PC-3 (cell line): ENCODE measurements at regions of chr2 and their contacts with region 1.

Region 1: GRCh38 chr2:121670181-121670580 is 20.9 kb upstream of the CLASP1 start:
- DNase-seq: no peak
- ATAC-seq: no peak
- H3K4me3 ChIP-seq: no peak overlapping the region
- H3K27ac ChIP-seq: no peak overlapping the region
- H3K4me1 ChIP-seq: peaks cover 8% of the 10 kb centered on the region
- H3K27me3 ChIP-seq: no peaks in the 10 kb centered on the region
- CTCF ChIP-seq: no peak

Region 2: DNA sequence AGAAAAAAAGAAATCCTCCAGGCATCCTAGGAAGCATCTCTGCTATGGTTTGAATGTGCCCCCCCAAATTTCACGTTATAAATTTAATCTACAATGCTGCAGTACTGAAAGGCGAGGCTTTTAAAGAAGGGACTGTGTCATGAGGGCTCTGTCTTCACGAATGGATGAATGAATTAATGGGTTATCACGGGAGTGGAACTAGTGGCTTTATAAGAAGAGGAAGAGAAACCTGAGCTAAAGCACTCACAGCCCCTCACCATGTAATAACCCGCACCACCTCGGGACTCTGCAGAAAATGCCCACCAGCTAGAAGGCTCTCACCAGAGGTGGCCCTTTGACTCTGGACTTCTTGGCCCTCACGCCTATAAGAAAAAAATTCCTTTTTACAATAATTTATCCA is 111.9 kb before region 1 on chr2:
- CTCF ChIA-PET with region 1: no interaction called
- POLR2A ChIA-PET with region 1: no interaction called
- intact Hi-C with region 1: no loop called
- DNase-seq: no peak
- ATAC-seq: no peak
- H3K4me3 ChIP-seq: no peak overlapping the region
- H3K27ac ChIP-seq: no peak overlapping the region
- H3K4me1 ChIP-seq: 0 out of 2 replicates have a peak, but pooled peaks cover 3% of the 10 kb centered on the region
- H3K27me3 ChIP-seq: no peaks in the 10 kb centered on the region
- CTCF ChIP-seq: no peak

Region 3: GRCh38 chr2:121617042-121617599 is 53.1 kb before region 1 on chr2:
- CTCF ChIA-PET with region 1: no interaction called
- POLR2A ChIA-PET with region 1: no interaction called
- intact Hi-C with region 1: no loop called
- DNase-seq: no peak
- ATAC-seq: no peak
- H3K4me3 ChIP-seq: no peak overlapping the region
- H3K27ac ChIP-seq: no peak overlapping the region
- H3K4me1 ChIP-seq: no peaks in the 10 kb centered on the region
- H3K27me3 ChIP-seq: no peaks in the 10 kb centered on the region
- CTCF ChIP-seq: no peak

Region 4: DNA sequence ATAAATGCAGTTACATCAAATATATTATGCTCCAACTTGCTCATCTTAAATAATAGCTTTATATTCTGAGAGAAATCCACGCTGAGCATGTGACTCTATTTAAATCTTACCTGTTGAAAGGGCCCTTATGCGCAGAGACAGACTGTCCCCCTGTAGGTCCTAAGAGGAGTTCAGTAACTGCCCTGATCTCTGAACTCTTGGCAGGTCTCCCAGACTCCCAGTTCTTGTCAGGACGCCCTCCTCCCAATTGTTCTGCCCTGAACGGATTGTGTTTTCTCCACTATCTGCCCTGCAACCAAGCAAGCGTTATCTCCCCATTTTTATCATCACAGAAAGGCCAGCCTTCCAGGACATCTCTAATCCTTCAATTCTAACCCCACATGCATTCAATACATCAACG is 1039.9 kb after region 1 on chr2:
- CTCF ChIA-PET with region 1: no interaction called
- POLR2A ChIA-PET with region 1: no interaction called
- intact Hi-C with region 1: loop called (anchors 10 kb)
- DNase-seq: no peak
- ATAC-seq: no peak
- H3K4me3 ChIP-seq: no peak overlapping the region
- H3K27ac ChIP-seq: no peak overlapping the region
- H3K4me1 ChIP-seq: peaks cover 12% of the 10 kb centered on the region
- H3K27me3 ChIP-seq: no peaks in the 10 kb centered on the region
- CTCF ChIP-seq: no peak